B cell (primary cell): ENCODE measurements at regions of chr6 and their contacts with region 1.

Region 1: DNA sequence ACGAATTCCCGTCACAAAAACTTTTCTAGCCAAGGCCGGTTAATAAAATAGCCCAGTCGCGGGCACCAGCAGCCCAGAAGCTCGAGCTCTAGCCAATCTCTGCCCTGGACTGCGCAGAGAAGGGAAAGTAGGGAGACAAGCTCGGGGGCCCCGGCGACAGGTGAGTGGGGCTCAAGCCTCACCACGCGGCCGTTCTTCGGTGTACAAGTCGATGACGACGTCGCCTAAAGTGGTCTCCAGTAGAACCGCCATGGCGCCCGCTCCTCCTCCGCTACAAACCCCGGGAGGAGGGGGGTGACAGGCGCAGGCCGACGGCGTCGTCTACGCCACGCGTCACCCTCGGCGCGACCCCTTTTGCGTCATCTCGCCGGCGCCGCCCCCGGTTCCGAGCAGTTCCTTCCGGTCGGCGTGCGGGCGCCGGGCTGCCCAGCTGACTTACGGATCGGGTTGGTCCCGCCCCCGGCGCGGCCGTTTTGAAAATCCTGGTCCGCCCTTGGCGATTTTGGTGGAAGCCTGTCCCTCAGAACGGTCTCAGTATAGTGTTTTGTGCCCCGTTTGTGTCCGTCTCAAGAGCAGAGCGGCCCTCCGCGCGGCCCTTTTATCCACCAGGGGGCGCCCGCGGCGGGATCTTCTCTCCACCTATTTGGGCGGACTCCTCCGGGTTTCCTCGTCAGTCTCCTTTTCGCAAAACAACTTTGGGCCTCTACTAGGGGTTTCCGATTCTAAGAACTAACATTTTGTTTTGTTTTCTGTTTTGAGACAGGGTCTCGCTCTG is at the start of gene PPIL4:
- DNase-seq: peak; percentile 98
- ATAC-seq: peak; percentile 90
- H3K4me3 ChIP-seq: peak within 1 kb of the TSS; percentile 96 to 100 (median 98)
- H3K4me3 Mint-ChIP-seq: peak within 1 kb of the TSS; percentile 98
- H3K27ac ChIP-seq: peak within 1 kb of the TSS; percentile 99
- H3K27ac Mint-ChIP-seq: peak within 1 kb of the TSS; percentile 98
- H3K4me1 ChIP-seq: peaks cover 17 to 22% of the 10 kb centered on the region in 2 donors
- H3K4me1 Mint-ChIP-seq: peaks cover 39% of the 10 kb centered on the region
- H3K27me3 ChIP-seq: no peaks in the 10 kb centered on the region
- H3K27me3 Mint-ChIP-seq: peaks cover 6% of the 10 kb centered on the region
- CTCF ChIP-seq: peak; percentile 83
- total RNA-seq, gene PPIL4: 34.3 and 36.1 TPM in 2 replicates

Region 2: GRCh38 chr6:149628875-149629510 is 83.1 kb after region 1 on chr6:
- CTCF ChIA-PET with region 1: no interaction called
- POLR2A ChIA-PET with region 1: no interaction called
- intact Hi-C with region 1: no loop called
- DNase-seq: peak; percentile 55
- ATAC-seq: peak; percentile 70
- H3K4me3 ChIP-seq: no peak overlapping the region
- H3K4me3 Mint-ChIP-seq: peak overlapping the region; percentile 27
- H3K27ac ChIP-seq: peak overlapping the region in 1 of 2 donors; percentile 81
- H3K27ac Mint-ChIP-seq: peak overlapping the region; percentile 89
- H3K4me1 ChIP-seq: peaks cover 7 to 12% of the 10 kb centered on the region in 2 donors
- H3K4me1 Mint-ChIP-seq: peaks cover 16% of the 10 kb centered on the region
- H3K27me3 ChIP-seq: no peaks in the 10 kb centered on the region
- H3K27me3 Mint-ChIP-seq: no peaks in the 10 kb centered on the region
- CTCF ChIP-seq: no peak

Region 3: DNA sequence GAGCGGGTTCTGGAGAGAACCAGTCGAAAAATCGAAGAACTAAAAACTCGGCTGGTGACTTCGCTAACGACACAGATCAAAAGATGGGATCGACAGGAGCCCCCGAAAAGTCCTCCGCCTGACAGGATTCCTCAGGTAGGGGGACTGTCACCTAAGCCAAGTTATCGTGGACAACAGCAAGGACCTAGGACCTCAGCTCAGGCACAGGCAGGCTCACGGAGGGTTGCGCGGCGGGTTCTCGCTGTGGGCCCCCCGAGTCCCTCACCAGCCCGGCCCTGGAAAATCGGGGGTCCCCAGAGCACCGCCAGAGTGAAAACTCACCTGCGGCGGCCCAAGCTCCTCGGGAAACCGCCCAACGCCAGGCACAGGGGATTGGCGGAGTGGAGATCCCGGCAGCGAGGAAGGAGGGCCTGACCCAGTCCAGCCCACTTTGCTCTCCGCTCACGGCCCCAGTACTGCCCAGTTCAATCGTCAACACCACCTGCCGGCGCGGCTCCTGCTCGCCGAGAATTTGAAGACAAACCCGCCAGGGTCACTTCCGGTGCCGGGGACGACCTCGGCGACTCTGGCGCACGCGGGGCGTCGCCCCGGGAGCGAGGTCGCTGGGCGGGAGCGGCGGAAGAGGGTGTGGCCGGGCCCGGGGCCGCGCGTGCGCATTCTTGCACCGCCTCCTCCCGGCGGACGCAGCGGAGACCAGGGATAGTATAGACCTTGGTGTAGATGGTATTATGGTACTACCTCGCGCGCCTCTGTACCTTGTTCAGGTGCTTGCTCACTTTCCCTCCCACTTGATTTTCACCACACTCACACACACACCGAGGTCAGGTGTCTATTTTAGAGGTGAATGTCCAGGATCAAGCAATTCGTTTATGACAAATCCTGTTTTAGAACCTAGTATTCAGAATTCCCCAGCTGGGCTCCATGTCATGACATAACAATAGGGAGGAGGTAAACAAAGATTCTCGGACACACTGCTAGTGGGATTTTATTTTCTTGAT is 102.5 kb after region 1 on chr6 and contains the start of gene KATNA1:
- CTCF ChIA-PET with region 1: no interaction called
- POLR2A ChIA-PET with region 1: no interaction called
- intact Hi-C with region 1: loop called (anchors 1 kb)
- DNase-seq: peak; percentile 89
- ATAC-seq: peak; percentile 94
- H3K4me3 ChIP-seq: peak within 1 kb of the TSS; percentile 70 to 93 (median 85)
- H3K4me3 Mint-ChIP-seq: peak within 1 kb of the TSS; percentile 96
- H3K27ac ChIP-seq: peak within 1 kb of the TSS; percentile 47 to 83
- H3K27ac Mint-ChIP-seq: peak within 1 kb of the TSS; percentile 91
- H3K4me1 ChIP-seq: peaks cover 17 to 18% of the 10 kb centered on the region in 2 donors
- H3K4me1 Mint-ChIP-seq: peaks cover 37% of the 10 kb centered on the region
- H3K27me3 ChIP-seq: no peaks in the 10 kb centered on the region
- H3K27me3 Mint-ChIP-seq: no peaks in the 10 kb centered on the region
- CTCF ChIP-seq: no peak
- total RNA-seq, gene KATNA1: 18.5 and 19.8 TPM in 2 replicates